Sciatic nerve (tissue), 2 donors: ENCODE measurements at regions of chr7 and their contacts with region 1.

Region 1: DNA sequence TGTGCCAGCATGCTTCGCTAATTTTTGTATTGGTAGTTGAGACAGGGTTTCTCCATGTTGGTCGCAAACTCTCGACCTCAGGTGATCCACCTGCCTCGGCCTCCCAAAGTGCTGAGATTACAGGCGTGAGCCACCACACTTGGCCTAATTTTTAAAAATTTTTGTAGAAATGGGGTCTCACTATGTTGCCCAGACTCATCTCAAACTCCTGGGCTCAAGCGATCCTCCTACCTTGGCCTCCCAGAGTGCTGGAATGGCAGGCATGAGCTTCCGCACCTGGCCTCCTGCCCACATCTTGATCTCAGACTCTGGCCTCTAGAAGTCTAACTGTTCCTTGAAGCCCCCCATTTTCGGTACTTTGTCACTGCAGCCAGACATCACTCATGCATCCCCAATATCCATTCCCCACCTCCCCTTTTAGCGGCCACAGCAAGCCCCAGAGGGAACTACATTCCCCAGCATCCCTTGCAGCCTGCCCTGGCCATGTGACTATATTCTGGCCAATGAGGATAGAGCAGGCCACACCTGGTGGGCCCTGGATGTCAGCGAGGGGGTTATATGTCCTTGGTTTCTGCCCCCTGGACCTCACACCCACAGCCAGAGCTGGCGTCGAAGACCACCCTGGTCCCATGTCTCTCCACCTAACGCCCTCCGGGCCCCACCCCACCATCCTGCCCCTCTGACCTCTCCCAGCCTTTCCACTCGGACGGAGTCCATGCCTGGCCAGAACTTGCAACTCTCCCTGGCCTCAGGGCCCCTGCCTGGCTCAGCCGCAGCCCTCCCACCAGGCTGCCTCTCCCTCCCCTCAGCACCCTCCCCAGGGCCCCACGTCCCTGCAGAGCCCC is 33.8 kb downstream of the MICALL2 start:
- DNase-seq: no peak
- ATAC-seq: no peak

Region 2: GRCh38 chr7:754531-755412 is 670.7 kb before region 1 on chr7:
- intact Hi-C with region 1: no loop called
- DNase-seq: peak; percentile 40
- ATAC-seq: no peak

Region 3: GRCh38 chr7:1351881-1352625 is 73.5 kb before region 1 on chr7:
- intact Hi-C with region 1: loop called (anchors 2 kb)
- DNase-seq: no peak
- ATAC-seq: no peak

Region 4: GRCh38 chr7:1473864-1474512 is 48.5 kb after region 1 on chr7:
- intact Hi-C with region 1: loop called (anchors 10 kb)
- DNase-seq: peak; percentile 94
- ATAC-seq: peak; percentile 77